ENCODE measurements at regions of chr11 and their contacts with region 1.

Region 1: GRCh38 chr11:43504316-43504950 is 145.7 kb downstream of the TTC17 start:
- H3K4me3 ChIP-seq: no peak overlapping the region
- H3K27ac ChIP-seq: no peak overlapping the region
- H3K4me1 ChIP-seq: no peaks in the 10 kb centered on the region
- CTCF ChIP-seq: 0 out of 2 replicates have a peak, but pooled peaks have one; percentile 15

Region 2: DNA sequence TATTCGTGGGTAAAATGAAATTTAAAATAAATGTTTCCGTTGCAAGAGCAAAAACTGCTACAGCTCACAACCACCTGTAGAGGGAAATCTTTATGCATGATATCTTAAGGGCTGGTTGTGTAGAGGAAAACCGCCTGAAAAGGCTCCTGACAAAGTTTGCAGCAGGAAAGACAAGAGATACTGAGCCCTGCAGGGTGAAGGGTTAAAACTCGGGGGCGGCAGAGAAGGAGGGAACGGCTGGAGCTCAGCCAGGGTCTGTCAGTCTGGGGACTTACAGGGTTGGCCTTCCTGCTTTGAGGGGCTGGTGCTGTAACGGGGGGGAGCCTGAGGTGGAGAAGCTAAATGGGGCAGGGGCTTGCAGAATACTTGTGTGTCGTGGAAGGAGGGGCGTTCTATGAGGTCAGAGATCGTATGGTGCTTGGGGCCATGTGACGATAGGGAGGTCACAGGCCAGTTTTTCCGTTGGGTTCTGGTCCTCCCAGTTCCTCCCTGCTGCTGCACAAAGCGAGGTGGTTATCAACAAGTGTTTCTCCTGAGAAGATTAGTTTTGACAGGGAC is 53.2 kb after region 1 on chr11:
- CTCF ChIA-PET with region 1: interaction called, 10 read pairs
- POLR2A ChIA-PET with region 1: no interaction called
- H3K4me3 ChIP-seq: no peak overlapping the region
- H3K27ac ChIP-seq: no peak overlapping the region
- H3K4me1 ChIP-seq: no peaks in the 10 kb centered on the region
- CTCF ChIP-seq: no peak

Region 3: DNA sequence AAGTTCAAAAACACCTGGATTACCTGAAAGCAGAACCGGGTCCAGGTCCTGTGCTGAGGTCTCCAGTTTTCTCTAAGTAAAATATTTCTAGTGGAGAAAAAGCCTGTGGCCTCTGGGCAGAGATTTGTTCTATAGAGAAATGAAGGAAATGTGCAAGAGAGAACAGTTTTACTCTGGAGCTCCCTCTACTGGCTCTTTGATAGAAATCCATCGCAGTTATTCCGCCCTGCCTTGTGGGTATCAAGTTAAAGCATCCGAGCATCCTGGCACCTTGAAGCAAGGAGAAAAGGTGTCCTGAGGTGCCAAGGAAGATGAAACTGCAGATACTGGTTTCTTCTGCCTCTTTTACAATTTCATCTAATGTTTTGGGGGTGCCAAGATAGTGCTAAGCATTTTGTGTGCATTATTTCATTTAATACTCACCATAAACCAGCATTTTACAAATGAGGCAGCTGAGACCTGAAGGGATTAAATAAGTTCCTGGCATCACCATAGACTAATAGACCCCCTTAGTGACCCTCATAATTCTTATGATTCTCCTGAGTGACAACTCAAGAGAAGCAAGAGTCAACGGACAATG is 63.1 kb after region 1 on chr11:
- CTCF ChIA-PET with region 1: interaction called, 33 read pairs
- POLR2A ChIA-PET with region 1: no interaction called
- H3K4me3 ChIP-seq: no peak overlapping the region
- H3K27ac ChIP-seq: no peak overlapping the region
- H3K4me1 ChIP-seq: no peaks in the 10 kb centered on the region
- CTCF ChIP-seq: no peak

Region 4: DNA sequence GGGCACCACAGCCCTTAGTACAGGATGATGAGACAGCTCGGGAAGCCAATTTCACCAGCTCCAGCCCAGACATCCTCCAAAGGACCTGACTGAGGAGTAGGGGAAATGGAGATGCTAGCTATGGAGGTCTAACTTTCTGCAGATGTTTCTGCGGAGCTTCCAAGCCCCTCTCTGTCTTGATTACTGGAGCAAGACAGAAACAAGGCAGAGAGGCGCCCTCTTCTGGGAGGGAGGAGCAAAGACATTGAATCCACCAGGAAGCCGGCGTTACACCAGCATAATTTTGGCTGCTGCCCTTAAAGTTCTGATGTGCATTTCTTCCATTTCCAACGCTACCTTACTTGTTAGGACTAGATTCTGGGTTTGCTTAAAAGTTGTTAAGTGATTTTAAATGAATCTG is 68.8 kb after region 1 on chr11:
- CTCF ChIA-PET with region 1: interaction called, 33 read pairs
- POLR2A ChIA-PET with region 1: interaction called, 3 read pairs
- H3K4me3 ChIP-seq: no peak overlapping the region
- H3K27ac ChIP-seq: no peak overlapping the region
- H3K4me1 ChIP-seq: peaks cover 3% of the 10 kb centered on the region; the same call in 1 of the 2 replicates
- CTCF ChIP-seq: no peak

Region 5: DNA sequence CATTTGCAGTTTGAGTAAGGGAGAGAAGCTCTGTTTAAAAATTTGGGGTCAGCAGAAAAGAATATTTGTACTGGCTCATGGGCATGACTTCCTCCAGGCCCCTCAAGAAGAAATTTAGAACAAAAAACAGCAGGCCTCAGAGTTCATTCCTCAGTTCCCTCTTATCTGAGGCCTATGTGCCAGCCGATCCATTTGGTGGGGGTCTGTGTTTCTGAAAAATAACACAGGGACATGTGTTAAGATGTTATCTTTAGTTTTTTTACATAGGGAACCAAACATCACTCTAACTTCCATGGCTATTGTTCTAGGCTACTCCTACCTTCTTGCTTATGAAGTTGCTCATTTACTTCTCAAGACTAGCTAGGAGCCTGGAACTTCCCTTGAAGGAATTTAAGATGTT is 159.9 kb after region 1 on chr11:
- CTCF ChIA-PET with region 1: no interaction called
- POLR2A ChIA-PET with region 1: no interaction called
- H3K4me3 ChIP-seq: no peak overlapping the region
- H3K27ac ChIP-seq: no peak overlapping the region
- H3K4me1 ChIP-seq: no peaks in the 10 kb centered on the region
- CTCF ChIP-seq: no peak

Measured in HEK293 (cell line).